Activated T-helper 1 cell treated with anti-CD3 and anti-CD28 coated beads, Interleukin-12 subunit alpha, Interleukin-12 subunit beta, Interleukin-2, Interleukin-4 antibody, amounts not matched to agents 30 ng/mL and 10 ng/mL and 1 ng/mL, durations not matched to agents 14 hours and 24 hours and 36 hours (primary cell): ENCODE measurements at regions of chrX and their contacts with region 1.

Region 1: DNA sequence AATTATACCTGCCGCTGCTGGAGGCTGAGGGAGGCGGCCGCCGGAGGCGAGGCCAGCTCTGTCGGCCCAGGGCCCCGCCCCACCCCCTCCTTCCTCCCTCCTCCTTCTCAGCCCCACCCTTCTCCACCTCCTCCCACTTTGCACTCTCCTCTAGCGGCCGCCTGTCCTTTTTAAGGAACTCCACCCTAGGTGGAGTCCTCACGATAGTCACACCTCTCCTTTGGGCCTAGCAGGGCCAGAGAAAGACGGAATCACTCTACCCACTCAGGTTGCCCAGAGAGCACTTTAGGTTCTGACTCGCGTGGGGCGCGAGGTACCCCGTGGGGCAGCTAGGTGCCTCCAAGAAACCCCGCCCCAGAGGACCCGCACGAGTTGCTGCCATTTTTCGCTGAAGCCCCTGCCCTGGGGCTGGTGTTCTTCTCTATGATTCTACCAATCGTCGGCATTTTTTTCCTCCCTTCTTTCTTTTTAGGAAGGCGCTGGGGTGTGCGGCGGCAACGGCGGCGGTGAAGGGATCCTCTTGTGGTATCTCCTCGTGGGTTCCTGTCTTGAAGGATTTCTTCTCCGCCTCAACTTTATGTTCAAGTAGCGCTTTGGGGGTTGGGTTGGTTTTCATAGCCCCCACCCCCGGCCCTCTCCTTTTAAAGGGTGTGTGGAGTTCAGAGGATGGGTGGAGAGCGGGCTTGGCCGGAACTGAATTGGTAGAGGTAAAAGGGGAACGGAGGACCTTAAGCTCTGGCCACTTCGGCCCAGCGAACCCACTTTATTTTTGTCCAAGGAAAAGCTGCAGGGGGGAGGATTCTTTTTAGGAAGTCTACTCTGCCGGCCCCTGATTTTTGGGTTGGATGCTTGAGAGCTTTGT is at the start of gene KLF8:
- DNase-seq: peak; percentile 25
- H3K4me3 Mint-ChIP-seq: peak within 1 kb of the TSS; percentile 87
- H3K27ac Mint-ChIP-seq: peak within 1 kb of the TSS; percentile 78
- H3K4me1 Mint-ChIP-seq: peaks cover 35% of the 10 kb centered on the region
- H3K27me3 Mint-ChIP-seq: peaks cover 4% of the 10 kb centered on the region
- total RNA-seq, gene KLF8: 6.3 and 6.7 TPM in 2 replicates

Region 2: GRCh38 chrX:54639346-54640102 is 1592.9 kb before region 1 on chrX:
- intact Hi-C with region 1: loop called (anchors 10 kb)
- DNase-seq: peak; percentile 87
- H3K4me3 Mint-ChIP-seq: peak overlapping the region; percentile 93
- H3K27ac Mint-ChIP-seq: peak overlapping the region; percentile 99
- H3K4me1 Mint-ChIP-seq: peaks cover 10% of the 10 kb centered on the region
- H3K27me3 Mint-ChIP-seq: no peaks in the 10 kb centered on the region

Region 3: GRCh38 chrX:54808605-54809483 is 1423.6 kb before region 1 on chrX:
- intact Hi-C with region 1: loop called (anchors 5 kb)
- DNase-seq: peak; percentile 88
- H3K4me3 Mint-ChIP-seq: peak overlapping the region; percentile 89
- H3K27ac Mint-ChIP-seq: peak overlapping the region; percentile 85
- H3K4me1 Mint-ChIP-seq: peaks cover 17% of the 10 kb centered on the region
- H3K27me3 Mint-ChIP-seq: peaks cover 10% of the 10 kb centered on the region

Region 4: GRCh38 chrX:55717521-55718497 is 514.6 kb before region 1 on chrX and contains the start of gene RRAGB:
- intact Hi-C with region 1: loop called (anchors 1 kb)
- DNase-seq: peak; percentile 84
- H3K4me3 Mint-ChIP-seq: peak within 1 kb of the TSS; percentile 89
- H3K27ac Mint-ChIP-seq: peak within 1 kb of the TSS; percentile 73
- H3K4me1 Mint-ChIP-seq: peaks cover 36% of the 10 kb centered on the region
- H3K27me3 Mint-ChIP-seq: no peaks in the 10 kb centered on the region
- total RNA-seq, gene RRAGB: 4.4 and 6.1 TPM in 2 replicates

Region 5: GRCh38 chrX:55907968-55908607 is 324.4 kb before region 1 on chrX:
- intact Hi-C with region 1: loop called (anchors 2 kb)
- DNase-seq: peak; percentile 33
- H3K4me3 Mint-ChIP-seq: peak overlapping the region; percentile 85
- H3K27ac Mint-ChIP-seq: peak overlapping the region; percentile 92
- H3K4me1 Mint-ChIP-seq: peaks cover 31% of the 10 kb centered on the region
- H3K27me3 Mint-ChIP-seq: no peaks in the 10 kb centered on the region

Region 6: DNA sequence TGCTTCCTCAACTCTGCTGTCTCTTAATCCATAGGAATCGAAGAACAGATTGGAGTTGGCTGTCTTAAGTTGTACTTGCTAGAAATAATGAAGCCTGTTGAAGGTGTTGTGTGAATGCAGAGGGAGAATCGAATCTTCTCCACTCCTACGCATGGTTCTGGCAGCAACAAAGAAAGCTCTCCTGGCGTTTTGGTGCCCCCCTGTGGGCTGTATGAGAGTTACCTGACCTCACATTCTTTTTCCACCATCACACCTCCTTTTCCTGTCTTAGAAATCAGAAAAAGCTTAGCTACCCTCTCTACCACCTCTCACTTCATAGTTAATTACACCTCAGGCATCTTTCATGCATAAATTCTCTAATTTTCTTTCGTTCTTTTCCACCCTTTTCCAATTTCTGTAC is 16.0 kb after region 1 on chrX:
- intact Hi-C with region 1: loop called (anchors 1 kb)
- DNase-seq: peak; percentile 29
- H3K4me3 Mint-ChIP-seq: no peak overlapping the region
- H3K27ac Mint-ChIP-seq: no peak overlapping the region
- H3K4me1 Mint-ChIP-seq: peaks cover 9% of the 10 kb centered on the region
- H3K27me3 Mint-ChIP-seq: no peaks in the 10 kb centered on the region